Calu3 (cell line): ENCODE measurements at regions of chr2 and their contacts with region 1.

Region 1: GRCh38 chr2:172131713-172132555 is 29.2 kb upstream of the DLX2 start:
- DNase-seq: no peak
- H3K4me3 Mint-ChIP-seq: no peak overlapping the region
- H3K27ac Mint-ChIP-seq: no peak overlapping the region
- H3K4me1 Mint-ChIP-seq: no peaks in the 10 kb centered on the region
- H3K27me3 Mint-ChIP-seq: no peaks in the 10 kb centered on the region
- CTCF ChIP-seq: no peak

Region 2: DNA sequence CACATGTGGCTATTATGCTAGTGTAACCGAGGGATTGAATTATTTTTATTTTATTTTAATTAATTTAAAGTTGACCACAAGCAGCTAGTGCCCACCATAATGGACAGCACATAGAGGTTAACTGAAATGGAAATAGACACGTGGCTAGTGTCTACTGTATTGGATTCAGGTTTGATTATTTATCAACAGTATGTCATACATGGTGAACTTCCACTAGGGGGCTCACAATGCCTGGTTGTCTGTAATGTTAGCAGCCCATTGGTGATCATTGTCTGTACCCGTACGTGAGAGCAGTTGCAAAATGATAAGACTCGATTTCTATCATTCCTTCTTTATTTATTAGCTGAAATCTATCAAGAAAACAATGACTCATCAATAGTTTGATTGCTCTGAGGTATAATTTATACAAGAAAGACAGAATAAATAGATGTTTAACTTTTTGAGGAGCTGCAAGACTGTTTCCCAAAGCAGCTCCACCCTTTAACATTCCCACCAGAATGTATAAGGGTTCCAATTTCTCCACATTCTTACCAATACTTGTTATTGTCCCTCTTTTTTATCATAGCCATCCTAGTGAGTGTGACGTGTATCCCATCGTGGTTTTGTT is 533.1 kb before region 1 on chr2:
- CTCF ChIA-PET with region 1: no interaction called
- intact Hi-C with region 1: loop called (anchors 10 kb)
- DNase-seq: peak; percentile 58
- H3K4me3 Mint-ChIP-seq: no peak overlapping the region
- H3K27ac Mint-ChIP-seq: no peak overlapping the region
- H3K4me1 Mint-ChIP-seq: no peaks in the 10 kb centered on the region
- H3K27me3 Mint-ChIP-seq: peaks cover 44% of the 10 kb centered on the region
- CTCF ChIP-seq: peak; percentile 69

Region 3: GRCh38 chr2:171735991-171736710 is 395.8 kb before region 1 on chr2:
- CTCF ChIA-PET with region 1: interaction called, 13 read pairs
- intact Hi-C with region 1: no loop called
- DNase-seq: no peak
- H3K4me3 Mint-ChIP-seq: no peak overlapping the region
- H3K27ac Mint-ChIP-seq: no peak overlapping the region
- H3K4me1 Mint-ChIP-seq: peaks cover 10% of the 10 kb centered on the region
- H3K27me3 Mint-ChIP-seq: no peaks in the 10 kb centered on the region
- CTCF ChIP-seq: no peak

Region 4: DNA sequence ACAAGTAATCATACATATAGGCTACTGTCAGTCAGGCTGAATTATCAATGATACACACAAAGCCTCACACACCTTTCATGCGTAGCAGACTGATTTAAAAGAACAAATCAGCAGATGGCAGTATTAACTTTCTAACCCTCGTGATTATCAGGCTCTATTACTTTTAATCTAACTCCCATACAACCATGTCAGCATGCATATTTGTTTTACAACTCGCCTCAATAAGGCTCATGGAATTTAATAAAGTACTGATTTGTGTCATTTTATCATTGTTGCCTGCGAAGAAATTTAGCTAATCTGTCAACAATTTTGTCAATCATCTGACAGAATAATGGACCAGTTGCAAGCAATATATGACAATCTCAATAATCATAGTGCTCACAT is 320.7 kb before region 1 on chr2:
- CTCF ChIA-PET with region 1: interaction called, 9 read pairs
- intact Hi-C with region 1: loop called (anchors 5 kb)
- DNase-seq: no peak
- H3K4me3 Mint-ChIP-seq: no peak overlapping the region
- H3K27ac Mint-ChIP-seq: no peak overlapping the region
- H3K4me1 Mint-ChIP-seq: no peaks in the 10 kb centered on the region
- H3K27me3 Mint-ChIP-seq: no peaks in the 10 kb centered on the region
- CTCF ChIP-seq: no peak

Region 5: DNA sequence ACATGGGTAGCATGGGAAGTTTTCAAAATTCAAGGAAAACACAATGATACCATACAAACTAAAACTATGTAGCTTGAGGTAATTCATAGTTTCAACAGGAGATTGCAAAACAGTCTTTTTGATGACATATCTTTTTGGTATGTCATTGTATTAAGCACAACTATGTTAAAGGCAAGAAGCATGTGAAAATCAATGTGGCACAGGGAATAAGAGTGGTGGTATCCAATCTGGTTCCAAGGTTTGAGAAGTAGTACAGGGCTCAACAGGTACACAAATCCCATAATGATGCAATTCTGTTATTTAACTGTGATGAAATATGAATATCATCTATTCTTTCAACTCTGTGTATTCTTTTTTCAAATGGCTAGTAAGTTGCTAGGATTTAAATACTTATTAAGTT is 12.8 kb before region 1 on chr2:
- CTCF ChIA-PET with region 1: interaction called, 11 read pairs
- intact Hi-C with region 1: no loop called
- DNase-seq: no peak
- H3K4me3 Mint-ChIP-seq: peak overlapping the region; percentile 25
- H3K27ac Mint-ChIP-seq: peak overlapping the region; percentile 91
- H3K4me1 Mint-ChIP-seq: peaks cover 29% of the 10 kb centered on the region
- H3K27me3 Mint-ChIP-seq: no peaks in the 10 kb centered on the region
- CTCF ChIP-seq: no peak